CD4-positive, alpha-beta T cell (primary cell): ENCODE measurements at regions of chr19 and their contacts with region 1.

Region 1: GRCh38 chr19:57435062-57435978 is at the start of gene ZNF749:
- DNase-seq: peak; percentile 91 to 99 (median 97)
- ATAC-seq: peak; percentile 100
- H3K4me3 ChIP-seq: peak within 1 kb of the TSS; percentile 79
- H3K4me3 Mint-ChIP-seq: peak within 1 kb of the TSS; percentile 97
- H3K27ac ChIP-seq: peak within 1 kb of the TSS; percentile 47 to 67
- H3K27ac Mint-ChIP-seq: peak within 1 kb of the TSS; percentile 70
- H3K4me1 ChIP-seq: peaks cover 21% of the 10 kb centered on the region
- H3K4me1 Mint-ChIP-seq: peaks cover 31% of the 10 kb centered on the region
- H3K27me3 ChIP-seq: no peaks in the 10 kb centered on the region
- H3K27me3 Mint-ChIP-seq: no peaks in the 10 kb centered on the region
- CTCF ChIP-seq: no peak
- total RNA-seq, gene ZNF749: 5.7 to 6.2 TPM

Region 2: DNA sequence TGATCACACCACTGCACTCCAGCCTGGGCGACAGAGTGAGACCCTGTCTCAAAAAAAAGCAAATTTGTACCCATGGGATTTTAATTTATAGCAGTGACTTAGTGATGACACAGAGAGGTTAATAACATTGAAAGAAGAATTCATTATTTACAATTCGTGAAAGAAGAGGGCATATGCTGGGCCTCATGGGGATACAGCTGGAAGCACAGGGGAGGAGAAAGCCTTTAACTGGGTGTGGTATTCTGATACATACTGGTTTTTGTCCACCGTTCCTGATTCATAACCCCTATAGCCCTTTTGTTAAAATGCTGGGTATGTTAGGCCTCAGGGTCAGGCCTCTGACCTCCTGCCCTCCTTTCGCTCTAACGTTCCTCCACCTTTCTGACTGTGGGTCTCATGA is 233.2 kb before region 1 on chr19:
- CTCF ChIA-PET with region 1: no interaction called
- POLR2A ChIA-PET with region 1: no interaction called
- intact Hi-C with region 1: no loop called
- DNase-seq: no peak
- ATAC-seq: no peak
- H3K4me3 ChIP-seq: no peak overlapping the region
- H3K4me3 Mint-ChIP-seq: no peak overlapping the region
- H3K27ac ChIP-seq: no peak overlapping the region
- H3K27ac Mint-ChIP-seq: no peak overlapping the region
- H3K4me1 ChIP-seq: peaks cover 12% of the 10 kb centered on the region
- H3K4me1 Mint-ChIP-seq: peaks cover 22% of the 10 kb centered on the region
- H3K27me3 ChIP-seq: no peaks in the 10 kb centered on the region
- H3K27me3 Mint-ChIP-seq: no peaks in the 10 kb centered on the region
- CTCF ChIP-seq: no peak

Region 3: DNA sequence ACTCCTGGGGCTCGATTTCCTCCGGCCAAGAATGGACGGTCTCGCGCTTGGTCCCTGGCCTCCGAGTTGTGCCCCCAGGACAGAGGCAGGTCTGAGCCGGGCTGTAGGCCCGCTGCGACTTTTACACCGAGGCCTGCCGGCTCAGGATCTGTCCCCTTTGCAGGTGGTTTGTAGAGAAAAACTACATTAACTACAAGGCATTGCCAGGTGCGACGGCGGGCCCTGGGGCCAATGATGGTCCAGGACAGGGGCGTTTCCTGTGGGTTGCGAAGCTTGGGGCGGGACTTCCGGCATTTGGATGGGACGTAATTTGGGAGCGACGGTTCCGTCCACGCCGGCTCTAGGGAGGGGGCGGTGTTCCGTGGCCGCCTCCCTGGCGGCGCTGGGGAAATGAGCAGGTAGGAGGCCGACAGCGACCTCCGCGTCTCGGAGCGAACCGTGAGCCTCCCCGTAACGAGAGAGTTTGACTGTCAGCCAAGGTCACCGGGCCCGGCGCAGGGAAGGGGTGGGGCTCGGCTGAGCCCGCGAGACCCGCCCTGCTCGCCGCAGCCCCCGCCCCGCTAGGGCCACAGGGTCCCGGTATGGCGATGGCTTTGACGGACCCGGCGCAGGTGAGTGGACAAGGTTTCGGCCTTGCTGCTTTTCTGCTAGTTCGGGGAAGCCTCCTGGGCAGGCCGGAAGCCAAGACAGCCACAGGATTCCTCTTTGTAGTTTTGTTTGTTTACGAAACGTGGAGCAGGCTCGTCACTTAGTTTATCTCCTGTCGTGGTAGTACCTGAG is 194.8 kb before region 1 on chr19 and contains the start of gene ZNF805:
- CTCF ChIA-PET with region 1: no interaction called
- POLR2A ChIA-PET with region 1: interaction called, 3 read pairs
- intact Hi-C with region 1: loop called in 1 of 2 experiments (anchors 2 kb)
- DNase-seq: peak; percentile 94 to 98 (median 96)
- ATAC-seq: peak; percentile 88
- H3K4me3 ChIP-seq: peak within 1 kb of the TSS; percentile 89
- H3K4me3 Mint-ChIP-seq: peak within 1 kb of the TSS; percentile 93
- H3K27ac ChIP-seq: peak within 1 kb of the TSS; percentile 89 to 96
- H3K27ac Mint-ChIP-seq: peak within 1 kb of the TSS; percentile 92
- H3K4me1 ChIP-seq: peaks cover 32% of the 10 kb centered on the region
- H3K4me1 Mint-ChIP-seq: peaks cover 40% of the 10 kb centered on the region
- H3K27me3 ChIP-seq: no peaks in the 10 kb centered on the region
- H3K27me3 Mint-ChIP-seq: no peaks in the 10 kb centered on the region
- CTCF ChIP-seq: no peak
- total RNA-seq, gene ZNF805: 33.1 to 33.7 TPM

Region 4: GRCh38 chr19:57362997-57363705 is 72.2 kb before region 1 on chr19 and contains the starts of genes TRAPPC2B and ZNF547:
- CTCF ChIA-PET with region 1: no interaction called
- POLR2A ChIA-PET with region 1: no interaction called
- intact Hi-C with region 1: loop called in 1 of 2 experiments (anchors 2 kb)
- DNase-seq: peak; percentile 96 to 99 (median 98)
- ATAC-seq: peak; percentile 90
- H3K4me3 ChIP-seq: peak within 1 kb of the TSS; percentile 69
- H3K4me3 Mint-ChIP-seq: peak within 1 kb of the TSS; percentile 94
- H3K27ac ChIP-seq: peak within 1 kb of the TSS; percentile 86 to 89
- H3K27ac Mint-ChIP-seq: peak within 1 kb of the TSS; percentile 94
- H3K4me1 ChIP-seq: peaks cover 15% of the 10 kb centered on the region
- H3K4me1 Mint-ChIP-seq: peaks cover 19% of the 10 kb centered on the region
- H3K27me3 ChIP-seq: no peaks in the 10 kb centered on the region
- H3K27me3 Mint-ChIP-seq: peaks cover 3% of the 10 kb centered on the region
- CTCF ChIP-seq: no peak
- total RNA-seq, gene TRAPPC2B: 11.5 to 12.7 TPM
- total RNA-seq, gene ZNF547: 1.4 to 2.1 TPM

Region 5: GRCh38 chr19:57410877-57411671 is 24.2 kb before region 1 on chr19 and contains the start of gene ZNF17:
- CTCF ChIA-PET with region 1: no interaction called
- POLR2A ChIA-PET with region 1: no interaction called
- intact Hi-C with region 1: loop called (anchors 1 kb)
- DNase-seq: peak; percentile 81 to 96 (median 90)
- ATAC-seq: peak; percentile 99
- H3K4me3 ChIP-seq: peak within 1 kb of the TSS; percentile 79
- H3K4me3 Mint-ChIP-seq: peak within 1 kb of the TSS; percentile 97
- H3K27ac ChIP-seq: peak within 1 kb of the TSS; percentile 58 to 68
- H3K27ac Mint-ChIP-seq: peak within 1 kb of the TSS; percentile 91
- H3K4me1 ChIP-seq: peaks cover 20% of the 10 kb centered on the region
- H3K4me1 Mint-ChIP-seq: peaks cover 39% of the 10 kb centered on the region
- H3K27me3 ChIP-seq: no peaks in the 10 kb centered on the region
- H3K27me3 Mint-ChIP-seq: no peaks in the 10 kb centered on the region
- CTCF ChIP-seq: no peak
- total RNA-seq, gene ZNF17: 9.3 to 10.0 TPM

Region 6: GRCh38 chr19:57527136-57527881 is 92.0 kb after region 1 on chr19 and contains the start of gene ZNF549:
- CTCF ChIA-PET with region 1: no interaction called
- POLR2A ChIA-PET with region 1: no interaction called
- intact Hi-C with region 1: loop called in 1 of 2 experiments (anchors 1 kb)
- DNase-seq: peak; percentile 76 to 96 (median 83)
- ATAC-seq: peak; percentile 97
- H3K4me3 ChIP-seq: peak within 1 kb of the TSS; percentile 96
- H3K4me3 Mint-ChIP-seq: peak within 1 kb of the TSS; percentile 97
- H3K27ac ChIP-seq: peak within 1 kb of the TSS; percentile 77 to 81
- H3K27ac Mint-ChIP-seq: peak within 1 kb of the TSS; percentile 94
- H3K4me1 ChIP-seq: peaks cover 18% of the 10 kb centered on the region
- H3K4me1 Mint-ChIP-seq: peaks cover 23% of the 10 kb centered on the region
- H3K27me3 ChIP-seq: no peaks in the 10 kb centered on the region
- H3K27me3 Mint-ChIP-seq: no peaks in the 10 kb centered on the region
- CTCF ChIP-seq: no peak
- total RNA-seq, gene ZNF549: 10.1 to 11.1 TPM